PC-3 (cell line): ENCODE measurements at regions of chr1 and their contacts with region 1.

Region 1: GRCh38 chr1:55140546-55140983 is 74.6 kb downstream of the USP24 start:
- DNase-seq: peak; percentile 92
- ATAC-seq: peak; percentile 97
- H3K4me3 ChIP-seq: no peak overlapping the region
- H3K27ac ChIP-seq: no peak overlapping the region
- H3K4me1 ChIP-seq: peaks cover 5% of the 10 kb centered on the region; the same call in 1 of the 2 replicates
- H3K27me3 ChIP-seq: no peaks in the 10 kb centered on the region
- CTCF ChIP-seq: peak; percentile 90

Region 2: GRCh38 chr1:55215256-55216021 is 74.9 kb after region 1 on chr1 and contains the start of gene USP24:
- CTCF ChIA-PET with region 1: interaction called, 14 read pairs
- POLR2A ChIA-PET with region 1: no interaction called
- intact Hi-C with region 1: loop called (anchors 1 kb)
- DNase-seq: peak; percentile 81
- ATAC-seq: peak; percentile 69
- H3K4me3 ChIP-seq: peak within 1 kb of the TSS; percentile 95
- H3K27ac ChIP-seq: peak within 1 kb of the TSS; percentile 60
- H3K4me1 ChIP-seq: peaks cover 42% of the 10 kb centered on the region
- H3K27me3 ChIP-seq: no peaks in the 10 kb centered on the region
- CTCF ChIP-seq: no peak
- total RNA-seq, gene USP24: 29.1 and 38.5 TPM in 2 replicates

Region 3: GRCh38 chr1:55277377-55278130 is 137.0 kb after region 1 on chr1:
- CTCF ChIA-PET with region 1: interaction called, 5 read pairs
- POLR2A ChIA-PET with region 1: no interaction called
- intact Hi-C with region 1: loop called (anchors 1 kb)
- DNase-seq: peak; percentile 83
- ATAC-seq: peak; percentile 94
- H3K4me3 ChIP-seq: no peak overlapping the region
- H3K27ac ChIP-seq: no peak overlapping the region
- H3K4me1 ChIP-seq: 0 out of 2 replicates have a peak, but pooled peaks cover 2% of the 10 kb centered on the region
- H3K27me3 ChIP-seq: no peaks in the 10 kb centered on the region
- CTCF ChIP-seq: peak; percentile 89